ENCODE measurements at regions of chr1 and their contacts with region 1.

Region 1: DNA sequence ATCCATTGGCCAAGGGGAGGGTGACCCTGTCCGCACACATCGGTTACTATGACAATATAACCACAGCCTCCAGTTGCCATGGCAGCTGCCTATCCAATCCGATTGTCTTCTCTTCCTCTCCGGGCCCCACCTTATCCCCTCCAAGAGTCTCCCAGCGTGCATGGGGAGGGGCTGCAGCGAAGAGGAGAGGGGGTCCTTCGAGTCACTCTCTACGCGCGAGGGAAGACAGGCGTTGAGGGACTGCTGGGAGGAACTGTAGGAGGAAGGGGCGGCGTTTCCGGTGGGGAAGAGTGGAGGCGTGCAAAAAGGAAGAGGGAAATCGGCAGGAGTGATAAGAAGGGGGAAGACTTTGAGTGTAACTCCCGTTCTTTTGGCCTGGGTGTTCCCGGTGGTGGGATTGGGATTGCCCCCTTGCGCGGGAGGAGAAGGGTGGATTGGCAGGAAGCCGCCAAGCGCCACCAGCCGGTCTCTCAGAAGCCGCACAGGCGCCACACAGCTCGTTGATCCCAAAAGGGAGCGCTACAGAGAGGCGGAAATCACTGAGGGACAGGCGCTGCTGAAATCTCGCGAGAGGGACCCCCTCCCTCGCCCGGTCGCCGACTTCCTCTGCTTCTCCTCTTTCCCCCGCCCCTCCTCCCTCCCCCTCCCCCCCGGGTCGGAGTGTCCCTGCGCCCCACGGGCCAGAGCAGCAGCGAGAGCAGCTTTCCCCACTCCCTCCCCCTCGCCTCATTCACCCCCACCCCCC is 384 bp upstream of the SMG7 start:
- DNase-seq: peak; percentile 95
- ATAC-seq: peak; percentile 75
- H3K4me3 ChIP-seq: peak overlapping the region; percentile 91 to 95
- H3K27ac ChIP-seq: peak overlapping the region; percentile 93
- H3K4me1 ChIP-seq: peaks cover 5 to 37% of the 10 kb centered on the region in 2 experiments; a peak in 3 of 4 replicates
- H3K27me3 ChIP-seq: no peaks in the 10 kb centered on the region
- CTCF ChIP-seq: no peak
- POLR2A ChIP-seq: no peak
- RAD21 ChIP-seq: no peak

Region 2: GRCh38 chr1:183543619-183544204 is 71.8 kb after region 1 on chr1:
- CTCF ChIA-PET with region 1: no interaction called
- POLR2A ChIA-PET with region 1: no interaction called
- RAD21 ChIA-PET with region 1: no interaction called
- intact Hi-C with region 1: loop called (anchors 1 kb)
- DNase-seq: peak; percentile 23
- ATAC-seq: peak; percentile 98
- H3K4me3 ChIP-seq: no peak overlapping the region
- H3K27ac ChIP-seq: no peak overlapping the region
- H3K4me1 ChIP-seq: peaks cover 0 to 3% of the 10 kb centered on the region in 2 experiments; a peak in 1 of 4 replicates
- H3K27me3 ChIP-seq: no peaks in the 10 kb centered on the region
- CTCF ChIP-seq: peak; percentile 47 to 74 (median 64); a peak in 5 of 6 replicates
- POLR2A ChIP-seq: no peak
- RAD21 ChIP-seq: peak; percentile 62

Region 3: DNA sequence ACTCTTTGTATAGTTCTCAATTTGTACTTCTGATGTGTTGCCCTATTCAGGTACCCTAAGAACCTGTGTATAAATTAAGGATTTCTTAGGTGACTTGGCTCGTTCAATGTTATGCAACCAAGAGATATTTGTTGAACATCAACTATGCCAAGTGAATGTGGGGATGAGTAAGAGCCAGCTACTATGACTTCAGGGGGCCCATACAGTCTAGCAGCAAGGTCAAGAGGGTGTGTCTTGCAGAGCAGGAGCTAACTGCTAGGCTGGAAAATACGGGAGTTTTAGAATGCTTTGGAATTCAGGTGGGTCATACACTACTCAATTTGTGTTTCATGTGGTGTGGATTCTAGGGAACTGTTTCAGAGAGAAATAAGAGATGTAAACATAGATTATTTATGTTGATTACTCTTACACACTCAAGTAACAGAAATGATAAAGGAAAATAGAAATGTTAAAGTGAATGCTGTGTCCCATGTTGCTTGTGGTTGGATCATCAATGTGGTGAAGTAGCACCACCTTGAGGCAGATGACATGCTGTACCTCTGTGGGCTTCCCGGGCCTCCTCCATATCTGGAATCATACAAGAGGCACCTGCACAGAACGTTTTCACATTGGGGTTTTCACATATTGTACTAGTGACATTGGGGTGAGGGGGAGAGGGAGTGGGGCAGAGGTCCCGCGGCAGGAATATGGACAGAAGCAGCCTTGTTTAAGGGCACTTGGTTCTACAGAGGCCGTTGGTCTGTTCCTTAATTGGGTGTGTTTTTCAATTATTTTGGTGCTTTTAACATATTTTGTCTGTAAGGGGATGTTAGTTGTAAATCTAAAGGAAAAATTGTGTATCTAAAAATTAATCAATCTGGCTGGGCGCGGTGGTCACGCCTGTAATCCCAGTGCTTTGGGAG is 151.2 kb after region 1 on chr1:
- CTCF ChIA-PET with region 1: no interaction called
- POLR2A ChIA-PET with region 1: no interaction called
- RAD21 ChIA-PET with region 1: no interaction called
- intact Hi-C with region 1: loop called (anchors 1 kb)
- DNase-seq: peak; percentile 51
- ATAC-seq: peak; percentile 99
- H3K4me3 ChIP-seq: no peak overlapping the region
- H3K27ac ChIP-seq: no peak overlapping the region
- H3K4me1 ChIP-seq: peaks cover 0 to 5% of the 10 kb centered on the region in 2 experiments; a peak in 1 of 4 replicates
- H3K27me3 ChIP-seq: no peaks in the 10 kb centered on the region
- CTCF ChIP-seq: peak; percentile 60 to 76 (median 71); a peak in 5 of 6 replicates
- POLR2A ChIP-seq: no peak
- RAD21 ChIP-seq: peak; percentile 90

Region 4: DNA sequence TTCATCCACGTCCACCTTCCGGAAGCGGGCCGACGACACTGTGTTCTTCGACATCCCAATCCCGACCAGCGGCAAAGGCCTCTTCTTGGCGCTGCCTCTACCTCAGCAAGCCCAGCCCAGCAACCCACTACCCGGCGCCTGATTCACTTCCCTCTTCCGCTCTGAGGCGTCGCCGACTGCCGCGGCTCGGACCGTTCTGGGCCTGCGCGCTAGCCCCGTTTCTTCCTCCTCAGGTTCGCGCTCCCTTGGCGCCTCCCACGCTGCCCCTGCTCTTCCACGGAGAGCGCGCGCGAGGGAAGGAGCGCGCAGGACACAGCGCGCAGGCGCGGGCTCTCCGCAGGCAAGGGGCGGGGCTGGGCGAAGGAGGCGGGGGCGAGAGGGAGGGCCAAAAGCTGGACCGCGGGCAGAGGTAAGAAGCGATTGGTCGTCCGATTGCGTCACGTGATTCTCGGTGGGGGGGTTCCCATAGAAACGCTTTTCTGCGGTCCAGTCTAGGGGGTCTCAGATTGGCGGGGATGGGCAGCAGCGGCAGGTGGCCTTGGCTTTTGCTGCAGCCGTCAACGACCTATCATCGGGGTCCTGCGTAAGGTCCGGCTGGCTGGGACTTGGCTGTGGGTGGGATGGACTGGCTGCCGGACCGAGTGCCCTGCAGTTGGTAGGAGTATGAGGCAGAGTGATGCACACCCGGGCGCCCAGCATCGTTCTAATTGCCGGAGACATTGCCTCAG is 163.9 kb after region 1 on chr1 and contains the start of gene ARPC5:
- CTCF ChIA-PET with region 1: no interaction called
- POLR2A ChIA-PET with region 1: no interaction called
- RAD21 ChIA-PET with region 1: no interaction called
- intact Hi-C with region 1: loop called (anchors 5 kb)
- DNase-seq: peak; percentile 92
- ATAC-seq: peak; percentile 94
- H3K4me3 ChIP-seq: peak within 1 kb of the TSS; percentile 79 to 81
- H3K27ac ChIP-seq: peak within 1 kb of the TSS; percentile 85
- H3K4me1 ChIP-seq: peaks cover 6 to 22% of the 10 kb centered on the region in 2 experiments; a peak in 3 of 4 replicates
- H3K27me3 ChIP-seq: no peaks in the 10 kb centered on the region
- CTCF ChIP-seq: no peak
- POLR2A ChIP-seq: peak; percentile 86
- RAD21 ChIP-seq: no peak
- total RNA-seq, gene ARPC5: 71.5 TPM

Region 5: GRCh38 chr1:183734543-183735036 is 262.7 kb after region 1 on chr1:
- CTCF ChIA-PET with region 1: no interaction called
- POLR2A ChIA-PET with region 1: no interaction called
- RAD21 ChIA-PET with region 1: no interaction called
- intact Hi-C with region 1: no loop called
- DNase-seq: no peak
- ATAC-seq: no peak
- H3K4me3 ChIP-seq: no peak overlapping the region
- H3K27ac ChIP-seq: no peak overlapping the region
- H3K4me1 ChIP-seq: no peaks in the 10 kb centered on the region
- H3K27me3 ChIP-seq: no peaks in the 10 kb centered on the region
- CTCF ChIP-seq: no peak
- POLR2A ChIP-seq: no peak
- RAD21 ChIP-seq: no peak